ENCODE measurements at regions of chr1 and their contacts with region 1.

Region 1: GRCh38 chr1:93692983-93693591 is 11.4 kb upstream of the BCAR3 start:
- DNase-seq: no peak
- ATAC-seq: peak; percentile 80
- H3K4me3 Mint-ChIP-seq: peak overlapping the region; percentile 64
- H3K27ac Mint-ChIP-seq: no peak overlapping the region
- H3K4me1 Mint-ChIP-seq: peaks cover 16% of the 10 kb centered on the region
- H3K27me3 Mint-ChIP-seq: no peaks in the 10 kb centered on the region
- CTCF ChIP-seq: no peak

Region 2: GRCh38 chr1:92975551-92976232 is 717.4 kb before region 1 on chr1:
- CTCF ChIA-PET with region 1: no interaction called
- POLR2A ChIA-PET with region 1: no interaction called
- intact Hi-C with region 1: loop called (anchors 10 kb)
- DNase-seq: peak; percentile 48
- ATAC-seq: peak; percentile 73
- H3K4me3 Mint-ChIP-seq: peak overlapping the region; percentile 67
- H3K27ac Mint-ChIP-seq: peak overlapping the region; percentile 99
- H3K4me1 Mint-ChIP-seq: peaks cover 91% of the 10 kb centered on the region
- H3K27me3 Mint-ChIP-seq: no peaks in the 10 kb centered on the region
- CTCF ChIP-seq: no peak

Region 3: GRCh38 chr1:93708734-93709481 is 15.8 kb after region 1 on chr1:
- CTCF ChIA-PET with region 1: interaction called, 9 read pairs
- POLR2A ChIA-PET with region 1: interaction called, 43 read pairs
- intact Hi-C with region 1: loop called (anchors 1 kb)
- DNase-seq: no peak
- ATAC-seq: no peak
- H3K4me3 Mint-ChIP-seq: peak overlapping the region; percentile 72
- H3K27ac Mint-ChIP-seq: peak overlapping the region; percentile 90
- H3K4me1 Mint-ChIP-seq: peaks cover 68% of the 10 kb centered on the region
- H3K27me3 Mint-ChIP-seq: no peaks in the 10 kb centered on the region
- CTCF ChIP-seq: no peak

Region 4: GRCh38 chr1:93734999-93735398 is 41.9 kb after region 1 on chr1:
- CTCF ChIA-PET with region 1: interaction called, 4 read pairs
- POLR2A ChIA-PET with region 1: interaction called, 3 read pairs
- intact Hi-C with region 1: loop called (anchors 2 kb)
- DNase-seq: no peak
- ATAC-seq: peak; percentile 28
- H3K4me3 Mint-ChIP-seq: no peak overlapping the region
- H3K27ac Mint-ChIP-seq: no peak overlapping the region
- H3K4me1 Mint-ChIP-seq: peaks cover 14% of the 10 kb centered on the region
- H3K27me3 Mint-ChIP-seq: no peaks in the 10 kb centered on the region
- CTCF ChIP-seq: no peak

Region 5: DNA sequence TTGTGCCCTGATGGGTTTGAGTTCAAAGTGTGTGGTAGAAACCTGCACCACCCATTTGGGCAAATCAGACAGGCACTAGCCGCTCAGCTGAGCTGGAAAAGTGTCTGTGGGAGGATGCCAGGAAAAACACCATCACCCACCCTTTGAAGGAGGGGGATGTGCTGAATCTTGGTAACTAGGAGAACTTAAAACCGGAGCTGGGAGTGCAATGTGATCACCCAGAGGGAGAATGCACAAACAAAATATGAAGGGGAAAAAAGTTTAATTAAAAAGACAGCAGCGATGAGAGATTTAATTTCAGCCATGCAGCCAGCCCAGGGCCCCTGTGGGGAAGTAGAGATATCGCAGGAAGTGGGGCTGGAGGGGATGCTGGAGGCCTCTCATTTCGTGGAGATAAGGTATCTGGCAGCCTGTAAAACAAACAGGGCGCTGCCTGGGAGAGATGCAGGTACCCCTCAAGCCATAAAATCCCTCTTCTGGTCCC is 75.3 kb after region 1 on chr1:
- CTCF ChIA-PET with region 1: no interaction called
- POLR2A ChIA-PET with region 1: no interaction called
- intact Hi-C with region 1: no loop called
- DNase-seq: no peak
- ATAC-seq: no peak
- H3K4me3 Mint-ChIP-seq: no peak overlapping the region
- H3K27ac Mint-ChIP-seq: no peak overlapping the region
- H3K4me1 Mint-ChIP-seq: no peaks in the 10 kb centered on the region
- H3K27me3 Mint-ChIP-seq: no peaks in the 10 kb centered on the region
- CTCF ChIP-seq: no peak

Region 6: GRCh38 chr1:93779540-93780192 is 86.6 kb after region 1 on chr1:
- CTCF ChIA-PET with region 1: no interaction called
- POLR2A ChIA-PET with region 1: no interaction called
- intact Hi-C with region 1: no loop called
- DNase-seq: no peak
- ATAC-seq: no peak
- H3K4me3 Mint-ChIP-seq: no peak overlapping the region
- H3K27ac Mint-ChIP-seq: no peak overlapping the region
- H3K4me1 Mint-ChIP-seq: no peaks in the 10 kb centered on the region
- H3K27me3 Mint-ChIP-seq: no peaks in the 10 kb centered on the region
- CTCF ChIP-seq: no peak

Measured in activated B cell treated with CpG ODN at 0.5 μM for 24 hours (primary cell).